Spleen (tissue), 13 donors: ENCODE measurements at regions of chr9 and their contacts with region 1.

Region 1: DNA sequence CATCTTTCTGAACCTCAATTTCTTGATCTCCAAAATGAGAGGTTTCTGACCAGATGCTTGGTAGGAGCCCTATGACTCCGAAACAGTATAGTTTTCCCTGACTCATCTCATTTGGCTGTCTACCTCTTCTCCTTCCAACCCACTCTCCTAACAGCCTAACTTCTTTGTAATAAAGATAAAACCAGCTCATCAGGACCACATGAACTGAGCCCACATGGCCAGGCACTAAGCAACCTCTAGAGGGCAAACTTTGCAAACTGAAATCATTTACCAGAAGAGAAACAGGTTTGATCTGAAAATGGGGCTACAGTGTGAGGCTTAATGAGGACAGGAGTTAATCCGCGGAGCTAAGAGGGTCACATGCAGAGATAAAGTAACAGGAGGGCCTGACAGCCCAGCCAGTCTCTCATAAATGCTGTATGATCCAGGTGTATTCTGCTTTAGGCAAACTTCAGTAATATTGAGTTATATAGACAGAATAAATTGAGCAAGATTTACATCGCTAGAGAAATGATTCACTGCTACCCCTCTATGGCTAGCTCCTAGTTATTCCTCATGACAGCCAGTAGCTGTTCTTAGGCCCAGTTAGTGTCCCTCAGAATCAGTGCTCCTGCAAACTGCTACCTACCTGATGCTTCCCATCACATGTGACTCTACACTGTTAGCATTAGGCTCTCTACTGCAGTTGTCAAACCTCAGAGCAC is 64.6 kb downstream of the ABCA1 start:
- DNase-seq: no peak
- H3K4me3 ChIP-seq: no peak overlapping the region
- H3K27ac ChIP-seq: peak overlapping the region in 1 of 8 donors; percentile 6
- H3K4me1 ChIP-seq: peaks cover 0 to 89% (median 39%) of the 10 kb centered on the region in 6 donors
- H3K27me3 ChIP-seq: no peaks in the 10 kb centered on the region
- CTCF ChIP-seq: peak; percentile 61 to 88 (median 74)
- POLR2A ChIP-seq: no peak

Region 2: GRCh38 chr9:105157130-105157583 is 293.8 kb after region 1 on chr9:
- intact Hi-C with region 1: loop called (anchors 10 kb)
- DNase-seq: peak; percentile 74
- H3K4me3 ChIP-seq: no peak overlapping the region
- H3K27ac ChIP-seq: no peak overlapping the region
- H3K4me1 ChIP-seq: peaks cover 0 to 30% (median 8%) of the 10 kb centered on the region in 6 donors
- H3K27me3 ChIP-seq: no peaks in the 10 kb centered on the region
- CTCF ChIP-seq: peak; percentile 21 to 68 (median 56)
- POLR2A ChIP-seq: no peak